ENCODE measurements at regions of chr2 and their contacts with region 1.

Region 1: DNA sequence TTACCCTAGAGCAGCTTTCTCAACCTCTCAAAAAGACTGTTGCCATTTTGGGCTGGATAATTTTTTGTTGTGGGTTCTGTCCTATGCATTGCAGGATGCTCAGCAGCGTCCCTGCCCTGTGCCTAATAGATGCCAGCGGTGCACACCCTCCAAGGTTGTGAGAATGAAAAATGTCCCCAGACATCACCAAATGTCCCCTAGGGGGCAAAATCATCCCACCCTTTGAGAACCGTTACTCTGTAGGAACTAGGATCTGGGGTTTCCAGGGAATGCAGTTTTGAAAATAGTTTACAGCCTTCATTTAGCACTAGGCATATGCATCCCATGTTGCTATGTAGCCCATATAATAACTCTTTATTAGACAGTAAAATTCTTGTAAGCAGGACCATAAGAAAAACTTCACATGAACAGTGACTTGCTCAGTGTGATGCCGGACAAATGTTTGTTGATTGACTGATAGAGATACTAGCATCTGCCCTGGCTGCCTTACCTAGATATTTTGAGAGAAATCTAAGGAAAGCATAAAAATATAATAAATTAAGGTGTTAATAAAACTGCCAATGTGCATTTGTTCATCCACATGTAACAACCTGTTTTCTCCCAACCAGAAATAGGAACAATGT is 79.2 kb upstream of the EPC2 start:
- DNase-seq: no peak
- H3K4me3 ChIP-seq: no peak overlapping the region
- H3K27ac ChIP-seq: no peak overlapping the region
- H3K4me1 ChIP-seq: no peaks in the 10 kb centered on the region
- H3K27me3 ChIP-seq: no peaks in the 10 kb centered on the region
- CTCF ChIP-seq: no peak
- POLR2A ChIP-seq: no peak

Region 2: DNA sequence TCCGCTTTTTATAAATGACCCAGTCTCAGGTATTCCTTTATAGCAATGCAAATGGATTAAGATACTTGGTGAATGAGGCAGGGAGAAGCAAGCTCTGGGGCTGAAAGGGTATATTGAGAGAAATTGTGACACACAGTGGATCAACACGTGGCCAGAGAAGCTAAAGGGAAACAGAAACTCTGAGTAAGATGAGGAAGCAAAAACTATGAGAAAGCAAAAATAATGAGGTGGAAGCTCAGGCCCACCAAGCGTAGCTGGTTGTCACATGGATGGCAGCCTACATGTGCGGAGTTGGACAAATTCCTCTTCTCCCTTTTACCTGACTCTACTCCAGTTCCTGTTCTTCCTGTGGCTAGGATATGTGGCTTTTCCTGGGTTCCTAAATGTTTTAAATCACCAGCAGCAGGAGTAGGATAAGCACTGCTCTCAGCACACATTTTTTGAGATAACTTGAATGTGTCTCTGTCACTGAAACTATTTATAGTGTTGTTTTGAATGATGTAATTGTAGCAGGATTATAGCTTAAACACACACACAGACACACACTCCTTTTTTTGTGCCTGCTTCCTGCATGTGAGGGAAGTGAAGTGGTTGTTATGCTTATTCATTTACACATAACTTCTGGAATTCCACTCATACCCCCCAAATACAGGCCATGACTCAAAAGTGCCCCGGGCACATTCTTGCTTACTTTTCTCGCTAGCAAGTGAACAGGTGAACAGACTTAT is 49.1 kb after region 1 on chr2:
- intact Hi-C with region 1: no loop called
- DNase-seq: peak; percentile 16
- H3K4me3 ChIP-seq: no peak overlapping the region
- H3K27ac ChIP-seq: no peak overlapping the region
- H3K4me1 ChIP-seq: peaks cover 9% of the 10 kb centered on the region
- H3K27me3 ChIP-seq: no peaks in the 10 kb centered on the region
- CTCF ChIP-seq: no peak
- POLR2A ChIP-seq: no peak

Region 3: GRCh38 chr2:148989882-148990493 is 424.6 kb after region 1 on chr2:
- intact Hi-C with region 1: loop called (anchors 10 kb)
- DNase-seq: peak; percentile 85
- H3K4me3 ChIP-seq: no peak overlapping the region
- H3K27ac ChIP-seq: no peak overlapping the region
- H3K4me1 ChIP-seq: no peaks in the 10 kb centered on the region
- H3K27me3 ChIP-seq: no peaks in the 10 kb centered on the region
- CTCF ChIP-seq: peak; percentile 52 to 66 (median 57)
- POLR2A ChIP-seq: no peak

Measured in testis (tissue), 5 donors.